Cardiac septum (tissue), 1 donor: ENCODE measurements at regions of chr7 and their contacts with region 1.

Region 1: GRCh38 chr7:94276795-94277194 is 117.9 kb upstream of the COL1A2 start:
- DNase-seq: no peak

Region 2: DNA sequence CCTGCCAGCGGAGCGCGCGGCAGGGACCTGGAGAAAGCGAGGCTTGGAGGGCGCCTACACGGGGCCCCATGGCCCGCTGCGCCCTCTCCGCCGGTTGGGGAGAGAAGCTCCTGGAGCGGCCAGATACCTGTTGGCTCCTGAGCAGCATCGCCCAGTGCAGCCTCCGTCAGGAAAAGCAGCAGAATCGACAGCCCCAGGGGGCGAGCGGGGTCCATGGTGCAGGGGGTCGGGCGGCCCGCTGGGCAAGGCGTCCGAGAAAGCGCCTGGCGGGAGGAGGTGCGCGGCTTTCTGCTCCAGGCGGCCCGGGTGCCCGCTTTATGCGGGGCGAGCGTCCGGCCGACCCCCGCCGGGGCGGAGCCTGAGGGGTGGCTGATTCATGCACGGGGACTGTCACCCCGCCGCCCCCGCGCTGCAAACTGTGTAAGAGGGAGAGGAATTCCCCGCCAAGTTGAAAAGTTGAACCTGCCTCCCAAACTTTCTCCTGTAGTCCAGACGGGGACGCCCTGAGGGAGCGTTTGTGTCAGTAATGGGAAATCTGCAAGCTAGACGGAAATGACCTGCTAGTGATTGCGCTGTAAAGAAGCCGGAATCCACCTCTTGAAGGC is 386.2 kb before region 1 on chr7 and contains the start of gene TFPI2:
- intact Hi-C with region 1: loop called (anchors 10 kb)
- DNase-seq: no peak
- total RNA-seq, gene TFPI2: 1.9 TPM